AG04449 (cell line): ENCODE measurements at regions of chr16 and their contacts with region 1.

Region 1: GRCh38 chr16:12095275-12096156 is 119.0 kb downstream of the SNX29 start:
- DNase-seq: no peak
- H3K4me3 ChIP-seq: no peak overlapping the region
- CTCF ChIP-seq: peak; percentile 74

Region 2: DNA sequence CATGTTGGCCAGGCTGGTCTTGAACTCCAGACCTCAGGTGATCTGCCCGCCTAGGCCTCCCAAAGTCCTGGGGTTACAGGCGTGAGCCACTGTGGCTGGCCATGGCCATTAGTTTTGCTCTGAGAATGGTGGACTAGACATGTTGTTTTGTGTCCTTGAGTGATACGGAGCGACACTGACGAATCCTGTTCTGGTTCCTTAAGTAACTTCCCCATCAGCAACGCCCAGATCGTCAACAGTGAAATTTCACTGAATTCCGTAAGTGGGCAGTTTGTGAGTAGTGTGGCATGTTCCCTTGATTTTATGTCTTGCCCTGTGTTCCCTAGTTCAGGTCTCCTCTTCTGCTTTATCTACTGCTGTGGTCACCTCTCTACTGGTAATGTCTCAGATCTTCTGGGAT is 51.6 kb before region 1 on chr16:
- CTCF ChIA-PET with region 1: no interaction called
- POLR2A ChIA-PET with region 1: no interaction called
- DNase-seq: no peak
- H3K4me3 ChIP-seq: no peak overlapping the region
- CTCF ChIP-seq: no peak

Region 3: GRCh38 chr16:12079412-12079965 is 16.0 kb before region 1 on chr16:
- CTCF ChIA-PET with region 1: interaction called, 40 read pairs
- POLR2A ChIA-PET with region 1: no interaction called
- DNase-seq: no peak
- H3K4me3 ChIP-seq: no peak overlapping the region
- CTCF ChIP-seq: no peak

Region 4: DNA sequence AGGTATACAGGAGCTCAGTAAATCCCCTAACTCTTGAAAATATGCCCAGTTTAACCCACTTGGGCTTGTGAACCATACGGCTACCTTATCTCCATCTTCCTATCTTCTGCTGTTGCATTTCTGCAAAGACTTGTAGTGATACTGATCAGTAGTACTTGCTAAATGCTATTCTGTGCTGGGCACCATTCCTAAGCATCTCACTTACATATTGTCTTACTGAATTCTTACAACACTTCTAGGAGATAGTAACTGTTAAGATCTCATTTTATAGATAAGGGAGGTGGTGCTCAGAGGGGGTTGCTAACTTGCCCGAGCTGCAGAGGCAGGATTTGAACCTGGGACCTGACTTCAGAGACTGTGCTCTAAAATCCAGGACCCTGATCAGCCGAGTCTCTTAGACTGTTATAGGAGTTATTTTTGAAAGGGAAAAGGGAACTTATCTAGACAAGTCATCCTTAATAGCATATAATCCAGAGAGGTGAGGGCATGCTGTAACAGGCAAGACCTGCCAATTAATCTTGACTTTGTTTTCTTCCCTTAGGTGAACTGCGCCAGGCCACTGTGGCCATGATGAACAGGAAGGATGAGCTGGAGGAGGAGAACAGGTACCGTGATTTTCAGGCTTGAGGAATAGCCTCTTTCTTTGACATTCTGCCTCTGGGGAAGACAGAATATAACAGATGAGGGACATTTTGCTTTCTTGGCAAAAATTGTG is 30.7 kb after region 1 on chr16:
- CTCF ChIA-PET with region 1: interaction called, 17 read pairs
- POLR2A ChIA-PET with region 1: no interaction called
- DNase-seq: no peak
- H3K4me3 ChIP-seq: no peak overlapping the region
- CTCF ChIP-seq: no peak

Region 5: GRCh38 chr16:12203780-12204351 is 108.3 kb after region 1 on chr16:
- CTCF ChIA-PET with region 1: interaction called, 18 read pairs
- POLR2A ChIA-PET with region 1: no interaction called
- DNase-seq: no peak
- H3K4me3 ChIP-seq: no peak overlapping the region
- CTCF ChIP-seq: no peak

Region 6: GRCh38 chr16:12250578-12250977 is 155.1 kb after region 1 on chr16:
- CTCF ChIA-PET with region 1: interaction called, 14 read pairs
- POLR2A ChIA-PET with region 1: no interaction called
- DNase-seq: no peak
- H3K4me3 ChIP-seq: no peak overlapping the region
- CTCF ChIP-seq: no peak

Region 7: GRCh38 chr16:12340151-12340733 is 244.7 kb after region 1 on chr16:
- CTCF ChIA-PET with region 1: interaction called, 48 read pairs
- POLR2A ChIA-PET with region 1: no interaction called
- DNase-seq: no peak
- H3K4me3 ChIP-seq: no peak overlapping the region
- CTCF ChIP-seq: peak; percentile 12

Region 8: DNA sequence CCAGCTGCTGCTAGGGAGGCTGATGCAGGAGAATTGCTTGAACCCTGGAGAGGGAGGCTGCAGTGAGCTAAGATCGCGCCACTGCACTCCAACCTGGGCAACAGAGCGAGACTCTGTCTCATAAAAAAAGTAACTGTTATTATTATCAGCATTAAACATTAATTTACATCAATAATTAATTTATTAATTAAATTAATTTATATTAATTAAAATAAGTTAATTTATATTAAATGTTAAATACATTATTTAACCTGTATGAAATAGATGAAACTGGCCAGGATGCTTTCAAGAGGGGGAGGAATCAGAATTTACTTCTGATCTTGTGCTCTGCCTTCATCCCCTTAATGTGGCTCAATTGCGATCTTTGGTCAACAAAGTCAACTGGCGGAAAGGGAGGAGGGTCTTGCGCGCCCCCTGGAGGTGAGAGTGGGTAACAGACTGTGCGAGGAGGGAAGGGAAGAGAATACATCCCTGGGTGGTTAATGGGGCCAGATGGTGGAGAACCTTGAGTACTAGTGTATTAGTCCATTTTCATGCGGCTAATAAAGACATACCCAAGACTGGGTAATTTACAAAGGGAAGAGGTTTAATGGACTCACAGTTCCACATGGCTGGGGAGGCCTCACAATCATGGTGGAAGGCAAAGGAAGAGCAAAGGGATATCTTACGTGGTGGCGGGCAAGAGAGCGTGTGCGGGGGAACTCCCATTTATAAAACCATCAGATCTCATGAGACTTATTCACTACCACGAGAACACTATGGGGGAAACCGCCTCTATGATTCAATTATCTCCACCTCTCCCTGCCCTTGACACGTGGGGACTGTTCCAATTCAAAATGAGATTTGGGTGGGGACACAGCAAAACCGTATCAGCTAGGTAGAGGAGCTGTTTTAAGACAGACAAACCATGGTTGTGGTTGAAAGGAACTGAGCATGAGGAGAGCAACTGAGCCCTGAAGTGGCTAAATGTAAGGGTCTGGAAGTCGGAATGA is 723.9 kb after region 1 on chr16:
- CTCF ChIA-PET with region 1: interaction called, 11 read pairs
- POLR2A ChIA-PET with region 1: no interaction called
- DNase-seq: no peak
- H3K4me3 ChIP-seq: no peak overlapping the region
- CTCF ChIP-seq: peak; percentile 93

Region 9: DNA sequence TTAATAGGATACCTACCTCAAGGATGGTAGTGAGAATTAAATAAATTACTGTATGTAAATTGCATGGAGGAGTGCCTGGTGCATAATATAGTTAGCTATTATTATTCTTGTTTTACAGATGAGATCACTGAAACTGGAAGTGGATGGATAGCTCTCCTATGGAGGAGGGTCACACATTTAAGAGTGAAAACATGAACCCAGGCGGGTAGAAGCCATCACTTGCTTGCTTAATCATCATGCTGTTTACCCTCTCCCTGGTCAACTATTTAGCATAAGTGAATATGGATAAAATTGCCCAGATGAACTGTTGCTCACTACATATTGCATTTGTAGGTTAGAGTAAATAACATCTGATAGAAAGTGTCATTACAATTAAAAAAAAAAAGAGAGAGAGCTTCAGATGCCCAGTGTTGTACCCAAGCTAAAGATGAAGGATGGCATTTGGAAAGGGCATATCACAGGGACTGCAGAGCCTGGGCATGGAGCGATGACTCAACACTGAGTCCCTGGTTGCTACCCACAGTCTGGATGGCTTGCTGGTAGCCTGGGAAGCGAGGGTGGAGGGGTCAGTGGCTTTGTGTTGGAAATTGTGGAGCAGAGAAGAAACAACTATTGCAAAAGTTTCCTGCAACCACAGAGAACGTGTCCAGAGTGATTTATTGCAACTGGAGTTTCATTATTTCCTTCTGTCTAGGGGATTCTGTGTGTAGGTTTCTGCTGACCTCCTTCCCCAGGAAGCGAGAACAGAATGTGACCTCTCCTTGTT is 1220.3 kb after region 1 on chr16:
- CTCF ChIA-PET with region 1: no interaction called
- POLR2A ChIA-PET with region 1: no interaction called
- DNase-seq: no peak
- H3K4me3 ChIP-seq: no peak overlapping the region
- CTCF ChIP-seq: no peak